ENCODE measurements at regions of chr4 and their contacts with region 1.

Region 1: GRCh38 chr4:104989371-104989770 is 157.3 kb upstream of the TET2 start:
- DNase-seq: no peak
- H3K4me3 Mint-ChIP-seq: no peak overlapping the region
- H3K27ac Mint-ChIP-seq: no peak overlapping the region
- H3K4me1 Mint-ChIP-seq: no peaks in the 10 kb centered on the region
- H3K27me3 Mint-ChIP-seq: peaks cover 4% of the 10 kb centered on the region

Region 2: DNA sequence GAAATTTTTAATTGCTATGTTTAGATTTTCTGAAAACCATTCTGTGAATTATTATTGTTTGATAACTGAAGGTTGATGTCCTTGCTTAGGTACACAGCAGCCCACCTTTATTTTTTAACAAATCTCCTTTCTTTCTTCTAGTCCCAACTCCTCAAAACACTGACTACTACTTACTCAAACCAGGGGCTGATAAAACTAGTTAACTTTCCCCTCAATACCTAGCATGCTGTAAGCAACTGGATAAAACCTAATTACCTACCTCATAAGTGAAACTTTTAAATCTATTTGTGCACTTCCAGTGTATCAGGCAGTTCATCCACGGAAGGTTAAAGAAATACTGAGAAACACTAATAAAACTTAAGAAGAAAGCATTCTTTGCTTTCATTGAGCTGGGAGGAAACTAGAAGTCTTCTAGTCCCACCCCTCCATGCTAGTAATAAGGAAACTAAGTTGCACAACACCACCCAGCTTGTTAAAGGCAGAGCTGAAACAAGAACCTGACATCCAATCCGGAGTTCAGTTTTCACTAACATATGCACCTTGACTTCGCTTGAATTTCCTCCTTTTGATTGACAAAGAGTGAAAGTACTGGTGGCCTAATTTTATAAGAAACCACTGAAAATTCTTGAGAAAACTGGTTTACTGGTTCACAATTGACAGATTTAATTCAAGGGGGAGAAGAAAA is 22.9 kb before region 1 on chr4:
- intact Hi-C with region 1: no loop called
- DNase-seq: peak; percentile 42
- H3K4me3 Mint-ChIP-seq: peak overlapping the region; percentile 63
- H3K27ac Mint-ChIP-seq: peak overlapping the region; percentile 91
- H3K4me1 Mint-ChIP-seq: peaks cover 17% of the 10 kb centered on the region
- H3K27me3 Mint-ChIP-seq: peaks cover 5% of the 10 kb centered on the region

Region 3: DNA sequence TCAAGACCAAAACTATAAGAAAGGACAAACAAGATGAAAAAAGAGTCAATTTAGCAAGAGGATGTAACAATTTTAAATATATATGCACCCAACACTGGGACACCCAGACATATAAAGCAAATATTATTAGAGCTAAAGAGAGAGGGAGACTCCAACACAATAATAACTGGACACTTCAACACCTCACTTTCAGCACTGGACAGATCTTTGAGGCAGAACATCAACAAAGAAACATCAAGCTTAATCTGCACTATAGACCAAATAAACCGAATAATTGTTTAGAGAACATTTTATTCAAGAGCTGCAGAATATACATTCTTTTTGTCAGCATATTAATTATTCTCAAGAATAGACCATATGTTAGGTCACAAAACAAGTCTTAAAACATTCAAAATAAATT is 47.6 kb after region 1 on chr4:
- intact Hi-C with region 1: loop called (anchors 5 kb)
- DNase-seq: no peak
- H3K4me3 Mint-ChIP-seq: no peak overlapping the region
- H3K27ac Mint-ChIP-seq: no peak overlapping the region
- H3K4me1 Mint-ChIP-seq: no peaks in the 10 kb centered on the region
- H3K27me3 Mint-ChIP-seq: peaks cover 4% of the 10 kb centered on the region